ENCODE measurements at regions of chr12 and their contacts with region 1.

Region 1: GRCh38 chr12:109775172-109775881 is 57.9 kb downstream of the TRPV4 start:
- DNase-seq: peak; percentile 64
- H3K4me3 ChIP-seq: no peak overlapping the region
- H3K27ac ChIP-seq: no peak overlapping the region
- H3K4me1 ChIP-seq: no peaks in the 10 kb centered on the region
- H3K27me3 ChIP-seq: no peaks in the 10 kb centered on the region
- CTCF ChIP-seq: peak; percentile 65 to 90 (median 86)
- POLR2A ChIP-seq: no peak

Region 2: GRCh38 chr12:109421355-109422087 is 353.8 kb before region 1 on chr12:
- intact Hi-C with region 1: loop called (anchors 5 kb)
- DNase-seq: no peak
- H3K4me3 ChIP-seq: no peak overlapping the region
- H3K27ac ChIP-seq: no peak overlapping the region
- H3K4me1 ChIP-seq: no peaks in the 10 kb centered on the region
- H3K27me3 ChIP-seq: no peaks in the 10 kb centered on the region
- CTCF ChIP-seq: no peak
- POLR2A ChIP-seq: no peak

Region 3: DNA sequence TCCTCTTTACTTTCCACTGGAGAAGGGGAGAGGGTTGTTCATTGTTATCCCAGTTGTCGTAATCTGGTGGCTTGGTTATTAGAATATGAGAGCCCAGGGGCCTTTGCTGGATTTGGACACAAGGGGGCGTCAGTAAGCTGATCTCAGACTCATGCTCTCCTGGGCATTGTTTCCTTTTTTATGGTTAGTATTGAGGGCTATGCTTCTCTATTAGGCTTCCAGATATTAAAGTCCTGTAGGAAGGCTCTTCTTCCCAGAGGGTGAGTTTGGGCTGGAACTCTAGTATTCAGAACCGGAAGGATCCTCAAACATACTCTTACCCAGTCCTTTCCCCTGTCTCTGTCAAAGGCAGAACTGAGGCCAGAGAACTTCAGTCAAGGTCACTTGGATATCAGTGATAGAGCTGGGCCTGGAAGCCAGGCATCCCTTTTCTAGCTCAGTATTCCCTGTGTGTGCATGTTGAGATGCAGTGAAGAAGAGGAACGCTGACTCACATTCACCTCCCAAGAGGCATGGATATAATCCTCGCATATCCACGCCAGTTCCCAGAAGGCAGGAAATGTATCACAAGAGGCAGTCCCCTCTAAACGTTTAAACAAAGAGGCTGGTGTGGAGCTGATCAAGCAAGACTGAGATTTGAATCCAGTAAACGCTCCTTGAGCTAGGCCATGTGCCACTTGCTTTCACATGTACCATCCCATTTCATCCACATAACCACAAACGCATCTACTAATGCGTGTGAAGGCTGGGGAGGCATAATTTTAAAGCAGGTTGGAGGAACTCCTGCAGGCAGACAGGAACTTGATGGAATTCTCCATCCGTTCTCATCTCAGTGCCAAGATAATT is 256.3 kb before region 1 on chr12:
- intact Hi-C with region 1: loop called (anchors 5 kb)
- DNase-seq: peak; percentile 53
- H3K4me3 ChIP-seq: no peak overlapping the region
- H3K27ac ChIP-seq: peak overlapping the region in 1 of 2 donors; percentile 23
- H3K4me1 ChIP-seq: no peaks in the 10 kb centered on the region
- H3K27me3 ChIP-seq: no peaks in the 10 kb centered on the region
- CTCF ChIP-seq: peak; percentile 57 to 81 (median 72)
- POLR2A ChIP-seq: no peak

Region 4: DNA sequence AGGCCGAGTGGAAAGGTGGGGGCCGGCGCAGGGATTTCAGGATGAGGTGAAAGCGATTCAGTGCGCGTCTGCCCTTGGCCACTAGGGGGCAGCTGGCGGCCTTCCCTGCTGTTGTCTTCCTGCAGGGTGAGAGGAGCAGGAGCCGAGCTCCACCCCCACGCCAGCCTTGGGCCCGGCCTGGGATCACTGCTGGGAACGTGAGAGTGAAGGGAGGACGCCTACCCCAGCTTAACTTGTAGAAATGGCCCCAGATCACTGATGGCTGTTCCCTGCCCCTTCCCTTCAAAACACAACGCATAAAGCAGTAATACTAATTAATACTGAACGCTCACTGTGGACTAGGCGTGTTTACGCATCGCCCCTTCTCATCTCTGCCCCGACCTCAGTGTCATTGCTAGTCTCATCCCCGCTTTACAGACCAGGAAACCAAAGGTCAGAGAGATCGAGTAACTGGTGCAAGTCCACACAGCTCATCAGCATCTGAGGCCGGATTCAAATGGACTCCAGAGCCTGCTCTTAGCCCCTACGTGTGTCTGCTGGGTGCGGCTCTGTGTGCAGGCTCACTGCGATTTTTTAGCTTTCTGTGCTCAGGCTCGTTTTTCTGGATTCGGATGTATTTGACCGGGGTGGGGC is 177.4 kb before region 1 on chr12:
- intact Hi-C with region 1: loop called (anchors 2 kb)
- DNase-seq: peak; percentile 80
- H3K4me3 ChIP-seq: no peak overlapping the region
- H3K27ac ChIP-seq: no peak overlapping the region
- H3K4me1 ChIP-seq: no peaks in the 10 kb centered on the region
- H3K27me3 ChIP-seq: no peaks in the 10 kb centered on the region
- CTCF ChIP-seq: peak; percentile 95 to 97 (median 96)
- POLR2A ChIP-seq: no peak

Region 5: GRCh38 chr12:109719236-109720022 is 55.9 kb before region 1 on chr12:
- intact Hi-C with region 1: loop called (anchors 5 kb)
- DNase-seq: no peak
- H3K4me3 ChIP-seq: no peak overlapping the region
- H3K27ac ChIP-seq: no peak overlapping the region
- H3K4me1 ChIP-seq: peaks cover 10% of the 10 kb centered on the region
- H3K27me3 ChIP-seq: no peaks in the 10 kb centered on the region
- CTCF ChIP-seq: no peak
- POLR2A ChIP-seq: no peak

Region 6: DNA sequence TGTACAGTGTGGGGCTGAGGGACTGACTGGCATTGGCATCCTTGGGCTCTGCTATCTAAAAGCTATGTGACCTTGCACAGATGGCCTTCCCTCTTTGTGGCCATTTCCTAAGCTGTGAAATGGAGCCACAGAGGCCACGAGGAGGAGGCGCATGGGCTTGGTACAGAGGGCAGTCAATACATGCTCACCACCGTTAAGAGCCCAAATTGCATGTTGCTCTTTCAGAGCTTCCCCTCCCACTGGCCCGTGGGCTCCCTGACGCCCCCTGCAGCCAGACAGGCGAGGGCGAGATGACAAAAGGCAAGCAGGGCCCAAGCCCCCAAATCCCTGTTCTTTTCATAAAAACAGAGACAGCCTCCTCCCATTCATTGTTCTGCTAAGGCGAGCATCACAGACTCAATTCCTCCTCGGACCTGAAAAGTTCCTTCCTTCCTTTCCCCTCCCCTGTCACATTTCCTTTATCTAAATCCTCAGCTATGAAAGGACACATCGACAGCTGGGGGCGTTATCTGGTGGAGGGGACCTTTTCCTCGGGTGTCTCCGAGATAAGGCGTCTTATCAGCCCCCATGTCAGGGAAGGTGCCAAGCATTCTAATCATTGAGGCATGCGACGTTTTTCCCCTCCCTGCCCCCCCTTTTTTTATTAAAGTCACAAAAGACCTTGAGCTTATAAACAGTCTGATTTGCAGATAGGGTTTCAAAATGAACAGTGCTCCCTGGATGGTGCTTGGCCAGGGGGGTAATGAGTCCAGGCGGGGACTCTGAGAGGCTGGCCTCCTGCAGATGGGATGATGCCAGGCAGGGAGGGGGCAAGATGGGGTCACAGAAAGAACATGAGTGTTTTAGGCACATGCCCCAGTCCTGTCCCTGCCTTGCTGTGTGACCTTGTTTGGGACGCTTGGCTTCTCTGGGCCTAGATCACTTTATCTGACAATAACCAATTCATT is 35.3 kb before region 1 on chr12:
- intact Hi-C with region 1: no loop called
- DNase-seq: no peak
- H3K4me3 ChIP-seq: no peak overlapping the region
- H3K27ac ChIP-seq: no peak overlapping the region
- H3K4me1 ChIP-seq: no peaks in the 10 kb centered on the region
- H3K27me3 ChIP-seq: no peaks in the 10 kb centered on the region
- CTCF ChIP-seq: no peak
- POLR2A ChIP-seq: no peak

Measured in prostate gland (tissue), 2 donors.